PC-3 (cell line): ENCODE measurements at regions of chr1 and their contacts with region 1.

Region 1: DNA sequence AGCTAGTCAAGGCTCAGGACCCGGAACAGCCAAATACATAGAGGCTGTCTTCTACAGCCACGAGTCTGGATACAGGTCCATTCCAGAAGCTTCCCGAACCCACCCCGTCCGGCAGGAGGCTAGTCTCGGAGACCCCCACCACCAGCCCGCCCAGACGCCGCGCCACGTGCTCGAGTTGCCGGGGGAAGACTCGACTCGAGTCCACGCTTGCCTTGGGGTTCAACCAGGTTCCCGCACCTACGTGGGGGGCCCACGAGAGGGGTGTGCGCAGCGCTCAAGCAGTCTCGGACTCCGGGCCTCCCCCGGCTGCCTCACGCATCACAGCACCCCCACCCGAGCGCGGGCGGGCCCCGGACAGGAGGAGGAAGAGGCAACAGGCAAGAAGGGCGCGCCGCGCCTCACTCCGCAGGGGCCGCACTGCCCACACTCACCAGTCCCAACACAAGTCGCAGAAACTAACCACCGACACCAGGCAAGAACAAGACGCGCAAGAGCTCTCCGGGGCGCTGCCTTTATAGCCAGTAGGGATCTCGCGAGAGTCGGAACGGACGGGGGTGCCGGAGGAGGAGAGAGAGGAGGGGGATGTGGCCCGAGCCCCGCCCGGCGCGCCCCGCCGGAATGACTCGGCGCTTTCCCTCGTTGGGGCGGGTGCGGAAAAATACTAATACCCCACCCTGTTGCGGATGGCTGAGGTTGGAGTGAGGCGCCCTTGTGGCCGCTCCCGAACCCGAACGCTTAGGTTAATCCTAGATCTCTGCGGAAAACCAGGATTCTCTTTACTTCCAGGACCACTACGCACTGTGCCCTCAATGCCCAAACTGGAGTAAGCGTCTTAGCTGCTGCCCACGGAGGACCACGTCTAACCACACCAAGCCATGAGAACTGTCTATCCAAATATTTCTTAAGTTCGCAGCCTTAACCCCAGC is at the start of gene PRDX1:
- DNase-seq: peak; percentile 99
- ATAC-seq: peak; percentile 72
- H3K4me3 ChIP-seq: peak within 1 kb of the TSS; percentile 99
- H3K27ac ChIP-seq: peak within 1 kb of the TSS; percentile 98
- H3K4me1 ChIP-seq: peaks cover 52% of the 10 kb centered on the region
- H3K27me3 ChIP-seq: no peaks in the 10 kb centered on the region
- CTCF ChIP-seq: 0 out of 2 replicates have a peak, but pooled peaks have one; percentile 17
- total RNA-seq, gene PRDX1: 749 and 967 TPM in 2 replicates

Region 2: GRCh38 chr1:45470306-45470798 is 51.3 kb before region 1 on chr1:
- CTCF ChIA-PET with region 1: no interaction called
- POLR2A ChIA-PET with region 1: no interaction called
- intact Hi-C with region 1: no loop called
- DNase-seq: no peak
- ATAC-seq: no peak
- H3K4me3 ChIP-seq: no peak overlapping the region
- H3K27ac ChIP-seq: no peak overlapping the region
- H3K4me1 ChIP-seq: no peaks in the 10 kb centered on the region
- H3K27me3 ChIP-seq: no peaks in the 10 kb centered on the region
- CTCF ChIP-seq: no peak

Region 3: DNA sequence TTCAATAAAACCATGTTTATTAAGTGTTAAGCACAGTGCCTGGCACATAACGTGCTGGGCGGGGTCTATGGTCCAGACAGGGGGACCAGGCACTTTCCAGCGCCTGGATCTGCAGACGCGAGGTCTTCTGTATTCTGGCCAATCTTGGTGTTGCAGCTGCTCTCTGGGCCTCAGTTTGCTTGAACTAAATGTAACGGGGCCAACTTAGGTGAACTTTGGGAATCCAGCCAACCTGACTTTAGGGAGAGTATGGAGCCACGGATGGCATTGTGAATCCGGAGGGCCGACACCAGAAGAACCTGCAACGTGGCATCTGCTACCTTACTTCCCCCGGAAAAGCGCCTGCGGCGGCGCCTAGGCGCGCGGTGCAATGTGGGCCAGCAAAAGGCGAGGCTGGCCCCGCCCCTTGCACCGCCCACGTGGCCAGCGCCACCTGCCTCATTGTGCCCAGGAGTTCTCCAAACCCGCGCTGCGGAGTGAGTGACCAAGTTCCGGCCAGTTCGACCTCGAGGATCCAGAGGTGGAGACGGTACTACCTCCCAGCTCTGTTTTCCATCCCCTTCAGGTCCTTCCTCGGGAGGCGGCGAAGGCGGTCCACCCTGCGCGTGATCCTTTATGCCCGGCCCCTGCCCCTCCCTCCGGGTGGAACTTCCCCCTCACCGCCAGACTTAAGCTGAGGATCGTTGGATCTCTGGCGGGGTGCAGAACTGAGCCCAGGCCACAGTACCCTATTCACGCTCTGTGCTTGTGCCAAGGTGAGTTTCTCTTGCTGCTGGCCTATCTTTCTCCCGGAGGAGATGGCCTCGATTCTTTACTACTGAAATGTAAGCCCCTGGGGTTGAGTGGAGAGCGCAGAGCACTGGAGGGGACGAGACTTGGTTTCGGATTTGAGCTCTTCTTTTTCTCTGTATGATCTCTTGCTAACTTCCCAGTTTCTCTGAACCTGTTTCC is 29.0 kb after region 1 on chr1 and contains the start of gene AKR1A1:
- CTCF ChIA-PET with region 1: interaction called, 4 read pairs
- POLR2A ChIA-PET with region 1: interaction called, 21 read pairs
- intact Hi-C with region 1: loop called (anchors 1 kb)
- DNase-seq: peak; percentile 94
- ATAC-seq: peak; percentile 92
- H3K4me3 ChIP-seq: peak within 1 kb of the TSS; percentile 92
- H3K27ac ChIP-seq: peak within 1 kb of the TSS; percentile 72
- H3K4me1 ChIP-seq: peaks cover 15% of the 10 kb centered on the region
- H3K27me3 ChIP-seq: no peaks in the 10 kb centered on the region
- CTCF ChIP-seq: no peak
- total RNA-seq, gene AKR1A1: 86.1 and 94.9 TPM in 2 replicates

Region 4: GRCh38 chr1:45557422-45557944 is 35.8 kb after region 1 on chr1:
- CTCF ChIA-PET with region 1: no interaction called
- POLR2A ChIA-PET with region 1: interaction called, 21 read pairs
- intact Hi-C with region 1: no loop called
- DNase-seq: no peak
- ATAC-seq: no peak
- H3K4me3 ChIP-seq: no peak overlapping the region
- H3K27ac ChIP-seq: no peak overlapping the region
- H3K4me1 ChIP-seq: peaks cover 2% of the 10 kb centered on the region
- H3K27me3 ChIP-seq: no peaks in the 10 kb centered on the region
- CTCF ChIP-seq: no peak